ENCODE measurements at regions of chr18 and their contacts with region 1.

Region 1: GRCh38 chr18:49548229-49548636 is 13.6 kb upstream of the LIPG start:
- DNase-seq: peak; percentile 29
- ATAC-seq: peak; percentile 58
- H3K4me3 ChIP-seq: no peak overlapping the region
- H3K27ac ChIP-seq: peak overlapping the region; percentile 20; the same call in 1 of the 2 replicates
- H3K4me1 ChIP-seq: peaks cover 8% of the 10 kb centered on the region
- H3K27me3 ChIP-seq: no peaks in the 10 kb centered on the region
- CTCF ChIP-seq: no peak

Region 2: DNA sequence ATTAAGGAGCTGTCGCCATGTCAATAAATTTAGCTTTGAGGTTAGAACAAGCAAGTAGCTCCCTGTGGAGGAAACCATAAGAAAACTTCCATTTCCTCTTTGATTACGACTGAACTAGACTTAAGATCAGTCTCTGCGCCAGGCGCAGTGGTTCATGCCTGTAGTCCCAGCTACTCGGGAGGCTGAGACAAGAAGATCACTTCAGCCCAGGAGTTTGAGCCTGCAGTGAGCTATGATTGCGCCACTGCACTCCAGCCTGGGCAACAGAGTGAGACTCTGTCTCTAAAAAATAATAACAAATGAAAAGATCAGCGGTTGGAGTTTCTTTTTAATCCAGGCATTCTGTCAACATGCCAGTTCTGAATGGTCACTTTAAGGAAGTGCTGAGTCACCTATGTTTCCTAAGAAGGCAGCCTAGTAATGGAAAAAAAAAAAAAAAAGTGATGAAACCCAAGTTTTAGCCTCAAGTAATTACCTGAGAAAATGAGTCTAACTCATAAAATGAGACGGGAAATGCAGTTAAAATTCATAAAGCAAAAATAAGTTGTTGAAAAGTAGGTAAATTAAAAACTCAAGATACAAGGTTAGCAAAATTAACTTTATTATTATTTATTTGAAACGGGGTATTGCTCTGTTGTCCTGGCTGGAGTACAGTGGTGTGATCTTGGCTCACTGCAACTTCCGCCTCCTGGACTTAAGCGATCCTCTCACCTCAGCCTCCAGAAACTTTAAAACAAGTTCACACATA is 71.4 kb before region 1 on chr18:
- CTCF ChIA-PET with region 1: no interaction called
- POLR2A ChIA-PET with region 1: interaction called, 42 read pairs
- intact Hi-C with region 1: no loop called
- DNase-seq: peak; percentile 25
- ATAC-seq: no peak
- H3K4me3 ChIP-seq: no peak overlapping the region
- H3K27ac ChIP-seq: no peak overlapping the region
- H3K4me1 ChIP-seq: no peaks in the 10 kb centered on the region
- H3K27me3 ChIP-seq: no peaks in the 10 kb centered on the region
- CTCF ChIP-seq: no peak